Lower leg skin (tissue), 4 donors: ENCODE measurements at regions of chr6 and their contacts with region 1.

Region 1: GRCh38 chr6:25485821-25486534 is 166.0 kb upstream of the SCGN start:
- DNase-seq: no peak
- H3K4me3 ChIP-seq: no peak overlapping the region
- CTCF ChIP-seq: no peak
- POLR2A ChIP-seq: no peak

Region 2: DNA sequence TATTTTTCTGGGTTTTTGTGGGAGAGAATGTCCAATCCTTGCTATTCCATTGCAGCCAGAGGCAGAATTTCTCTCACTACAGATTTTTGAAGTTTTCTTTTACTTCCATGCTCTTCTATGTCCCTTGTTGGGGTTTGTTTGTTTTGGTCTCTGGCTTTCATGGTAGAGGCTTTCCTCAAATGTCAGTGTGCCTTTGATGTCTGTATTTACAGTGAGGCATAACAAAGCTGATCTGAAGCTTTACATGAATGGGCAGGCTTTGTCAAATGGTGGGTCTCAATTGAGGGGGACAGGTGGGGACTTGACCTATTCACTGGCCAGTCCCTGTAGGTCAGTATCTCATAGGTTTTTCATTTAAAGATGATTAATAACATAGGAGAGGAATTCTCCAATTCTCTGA is 215.4 kb before region 1 on chr6:
- intact Hi-C with region 1: loop called (anchors 5 kb)
- DNase-seq: no peak
- H3K4me3 ChIP-seq: no peak overlapping the region
- CTCF ChIP-seq: no peak
- POLR2A ChIP-seq: no peak